Activated CD4-positive, alpha-beta T cell treated with anti-CD3 and anti-CD28 coated beads, Interleukin-2, amount 10 ng/mL, durations not matched to agents 24 days and 14 days (primary cell): ENCODE measurements at regions of chr2 and their contacts with region 1.

Region 1: DNA sequence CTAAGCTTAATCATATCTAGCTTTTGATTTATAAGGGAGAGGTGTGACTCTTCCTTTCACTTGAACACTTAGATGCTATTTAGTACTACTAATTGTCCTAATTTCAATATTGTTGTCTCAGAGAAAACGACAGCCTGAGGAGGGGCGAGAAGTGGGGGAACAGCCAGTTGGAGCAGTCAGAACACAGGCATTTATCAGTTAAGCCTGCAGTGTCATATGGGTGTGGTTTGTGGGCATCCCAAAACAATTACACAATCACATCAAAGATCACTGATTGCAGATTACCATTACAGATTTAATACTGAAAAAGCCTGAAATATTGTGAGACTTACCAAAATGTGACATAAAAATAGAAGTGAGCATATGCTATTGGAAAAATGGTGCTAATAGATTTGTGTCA is 15.9 kb downstream of the TMEM131 start:
- DNase-seq: no peak
- H3K4me3 Mint-ChIP-seq: no peak overlapping the region
- H3K27ac Mint-ChIP-seq: no peak overlapping the region
- H3K4me1 Mint-ChIP-seq: peaks cover 5% of the 10 kb centered on the region
- H3K27me3 Mint-ChIP-seq: no peaks in the 10 kb centered on the region

Region 2: GRCh38 chr2:97966518-97967215 is 13.2 kb before region 1 on chr2:
- intact Hi-C with region 1: loop called (anchors 2 kb)
- DNase-seq: no peak
- H3K4me3 Mint-ChIP-seq: no peak overlapping the region
- H3K27ac Mint-ChIP-seq: no peak overlapping the region
- H3K4me1 Mint-ChIP-seq: peaks cover 38% of the 10 kb centered on the region
- H3K27me3 Mint-ChIP-seq: no peaks in the 10 kb centered on the region